Posterior vena cava (tissue), 2 donors: ENCODE measurements at regions of chr11 and their contacts with region 1.

Region 1: DNA sequence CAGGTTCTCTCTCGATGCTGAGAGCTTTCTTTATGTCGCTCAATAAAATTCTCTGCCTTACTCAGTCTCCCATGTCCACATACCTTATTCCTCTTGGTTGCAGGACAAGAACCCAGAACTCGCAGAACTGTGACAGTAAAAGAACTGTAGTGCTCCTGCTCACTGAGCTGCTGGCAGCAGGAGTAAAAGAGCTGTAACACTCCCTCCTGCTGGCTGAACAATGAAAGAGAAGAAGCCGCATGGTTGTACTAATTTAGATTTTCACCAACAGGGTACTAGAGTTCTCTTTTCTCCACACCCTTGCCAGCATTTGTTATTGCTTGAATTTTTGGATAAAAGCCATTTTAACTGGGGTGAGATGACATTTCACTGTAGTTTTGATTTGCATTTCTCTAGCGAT is 433.2 kb downstream of the GUCY1A2 start:
- DNase-seq: no peak

Region 2: DNA sequence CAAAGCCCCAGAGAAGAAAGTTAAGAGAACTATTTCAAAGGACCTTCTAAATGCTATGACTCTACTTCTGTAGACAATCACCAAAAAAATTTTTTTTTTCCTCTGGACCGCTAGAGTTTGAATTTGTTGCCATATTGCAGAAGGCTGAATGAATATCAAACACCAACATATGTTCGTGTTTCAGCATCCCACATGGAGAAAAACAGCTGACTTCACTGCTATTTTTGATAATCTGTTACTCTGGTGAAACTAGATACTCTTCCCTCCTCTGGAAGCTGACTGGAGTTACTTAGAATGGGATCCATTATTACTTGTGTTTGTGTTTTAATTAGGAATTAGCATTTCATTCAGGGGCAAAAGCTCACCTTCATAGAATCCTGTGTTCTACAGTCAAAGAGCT is 60.6 kb before region 1 on chr11:
- intact Hi-C with region 1: no loop called
- DNase-seq: no peak

Region 3: GRCh38 chr11:106601684-106602297 is 16.7 kb after region 1 on chr11:
- intact Hi-C with region 1: no loop called
- DNase-seq: no peak

Region 4: GRCh38 chr11:106619320-106619990 is 34.4 kb after region 1 on chr11:
- intact Hi-C with region 1: loop called in 1 of 2 experiments (anchors 2 kb)
- DNase-seq: no peak